ENCODE measurements at regions of chr15 and their contacts with region 1.

Region 1: DNA sequence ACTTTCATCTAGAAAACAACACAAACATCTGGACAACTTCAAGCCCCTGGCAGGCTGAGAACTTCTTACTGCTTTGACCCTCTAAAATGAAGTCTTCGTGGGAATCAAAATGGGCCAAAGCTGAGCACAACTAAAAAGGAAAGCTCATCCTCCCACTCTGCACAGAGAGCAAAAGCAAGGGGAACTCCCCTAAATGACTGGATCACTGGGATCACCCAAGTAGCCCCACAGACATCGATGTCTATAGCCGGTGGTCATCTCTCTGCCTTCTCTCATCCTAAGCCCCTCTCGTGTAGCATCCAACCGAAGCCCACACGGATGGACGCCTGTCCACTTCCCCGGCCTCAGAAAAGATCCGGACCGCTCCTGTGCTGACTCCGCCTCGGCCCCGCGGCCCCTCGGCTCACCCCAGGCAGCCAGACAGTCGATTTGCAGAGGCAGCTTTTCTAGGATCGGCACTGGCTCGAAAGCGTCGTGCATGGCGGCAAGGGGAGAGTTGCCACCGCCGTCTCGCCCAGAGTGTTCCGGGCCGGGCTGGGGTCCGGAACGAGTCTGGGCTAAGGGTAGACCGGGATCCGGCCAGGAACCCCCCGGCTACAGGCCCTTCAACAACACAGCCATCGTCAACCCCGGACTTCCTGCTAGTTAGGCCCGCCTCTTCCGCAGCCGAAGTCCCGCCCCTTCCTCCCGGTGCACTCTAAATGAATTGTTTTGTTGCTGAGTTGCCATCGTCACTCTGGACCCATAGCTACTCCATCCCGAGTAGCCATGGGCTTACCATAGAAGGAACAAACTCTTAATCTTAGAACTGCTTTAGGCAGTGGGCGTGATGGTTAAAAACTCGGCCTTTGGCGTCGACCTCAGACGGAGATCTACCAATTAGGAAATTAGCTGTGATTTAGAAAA is at the start of gene VPS39:
- DNase-seq: peak; percentile 78 to 88 (median 81)
- H3K4me3 ChIP-seq: peak within 1 kb of the TSS; percentile 70 to 94
- H3K4me3 Mint-ChIP-seq: peak within 1 kb of the TSS; percentile 95 to 98 (median 96)
- H3K27ac ChIP-seq: peak within 1 kb of the TSS; percentile 94
- H3K27ac Mint-ChIP-seq: peak within 1 kb of the TSS; percentile 79 to 98 (median 96)
- H3K4me1 ChIP-seq: peaks cover 34% of the 10 kb centered on the region
- H3K4me1 Mint-ChIP-seq: peaks cover 31 to 44% (median 37%) of the 10 kb centered on the region in 4 donors
- H3K27me3 ChIP-seq: no peaks in the 10 kb centered on the region
- H3K27me3 Mint-ChIP-seq: no peaks in the 10 kb centered on the region
- total RNA-seq, gene VPS39: 114 to 120 TPM

Region 2: GRCh38 chr15:42273102-42273899 is 65.4 kb after region 1 on chr15 and contains the starts of genes GANC and TMEM87A:
- CTCF ChIA-PET with region 1: no interaction called
- POLR2A ChIA-PET with region 1: interaction called, 20 read pairs
- intact Hi-C with region 1: loop called (anchors 1 kb)
- DNase-seq: peak; percentile 94 to 98 (median 95)
- H3K4me3 ChIP-seq: peak within 1 kb of the TSS; percentile 73 to 98
- H3K4me3 Mint-ChIP-seq: peak within 1 kb of the TSS; percentile 92 to 100 (median 99)
- H3K27ac ChIP-seq: peak within 1 kb of the TSS; percentile 87
- H3K27ac Mint-ChIP-seq: peak within 1 kb of the TSS; percentile 95 to 100 (median 99)
- H3K4me1 ChIP-seq: peaks cover 52% of the 10 kb centered on the region
- H3K4me1 Mint-ChIP-seq: peaks cover 38 to 69% (median 53%) of the 10 kb centered on the region in 4 donors
- H3K27me3 ChIP-seq: no peaks in the 10 kb centered on the region
- H3K27me3 Mint-ChIP-seq: peaks cover 0 to 2% of the 10 kb centered on the region in 2 donors
- total RNA-seq, gene GANC: 61.7 to 63.4 TPM
- total RNA-seq, gene TMEM87A: 49.9 to 56.6 TPM